ENCODE measurements at regions of chr6 and their contacts with region 1.

Region 1: DNA sequence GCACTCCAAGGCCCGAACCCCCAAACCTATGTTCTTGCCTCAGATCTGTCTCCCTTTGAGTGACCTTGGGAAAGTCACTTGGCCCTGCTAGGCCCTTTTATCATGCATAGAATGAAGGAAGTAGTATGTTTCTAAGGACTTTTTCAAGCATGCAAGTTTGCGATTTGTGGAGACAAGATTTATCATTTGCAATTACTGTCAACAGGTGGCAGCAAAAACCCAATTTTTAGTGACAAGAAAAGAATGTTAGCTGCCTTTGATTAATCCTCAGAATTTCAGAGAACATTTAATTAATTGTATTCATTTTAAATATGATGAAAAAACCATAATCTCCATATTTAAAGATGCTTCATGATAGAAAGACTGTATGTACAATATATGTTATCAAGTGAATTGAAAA is 28.3 kb upstream of the PREP start:
- DNase-seq: peak in 4 of 5 donors; percentile 35 to 49 (median 42)
- H3K4me3 ChIP-seq: no peak overlapping the region
- H3K4me3 Mint-ChIP-seq: no peak overlapping the region
- H3K27ac ChIP-seq: no peak overlapping the region
- H3K27ac Mint-ChIP-seq: no peak overlapping the region
- H3K4me1 ChIP-seq: no peaks in the 10 kb centered on the region
- H3K4me1 Mint-ChIP-seq: no peaks in the 10 kb centered on the region
- H3K27me3 ChIP-seq: no peaks in the 10 kb centered on the region
- H3K27me3 Mint-ChIP-seq: peaks cover 0 to 2% of the 10 kb centered on the region in 2 donors

Region 2: GRCh38 chr6:105484238-105485161 is 53.3 kb after region 1 on chr6:
- CTCF ChIA-PET with region 1: interaction called, 17 read pairs
- POLR2A ChIA-PET with region 1: no interaction called
- intact Hi-C with region 1: no loop called
- DNase-seq: peak in 4 of 5 donors; percentile 34 to 55 (median 44)
- H3K4me3 ChIP-seq: no peak overlapping the region
- H3K4me3 Mint-ChIP-seq: peak overlapping the region; percentile 20 to 71 (median 62)
- H3K27ac ChIP-seq: no peak overlapping the region
- H3K27ac Mint-ChIP-seq: peak overlapping the region in 6 of 7 donors; percentile 7 to 76 (median 60)
- H3K4me1 ChIP-seq: peaks cover 32% of the 10 kb centered on the region
- H3K4me1 Mint-ChIP-seq: peaks cover 13 to 34% (median 18%) of the 10 kb centered on the region in 4 donors
- H3K27me3 ChIP-seq: no peaks in the 10 kb centered on the region
- H3K27me3 Mint-ChIP-seq: no peaks in the 10 kb centered on the region